ENCODE measurements at regions of chr6 and their contacts with region 1.

Region 1: GRCh38 chr6:52087498-52087999 is at the start of gene PKHD1:
- DNase-seq: no peak
- ATAC-seq: peak in 1 of 2 donors; percentile 74
- H3K4me3 ChIP-seq: no peak within 1 kb of the TSS
- H3K27ac ChIP-seq: no peak within 1 kb of the TSS
- H3K4me1 ChIP-seq: no peaks in the 10 kb centered on the region
- H3K27me3 ChIP-seq: no peaks in the 10 kb centered on the region
- CTCF ChIP-seq: peak in 4 of 5 experiments; percentile 34 to 49 (median 42)
- POLR2A ChIP-seq: no peak
- total RNA-seq, gene PKHD1: 0.02 to 0.05 (median 0.02) TPM in 3 of 4 donors, not detected in the other

Region 2: DNA sequence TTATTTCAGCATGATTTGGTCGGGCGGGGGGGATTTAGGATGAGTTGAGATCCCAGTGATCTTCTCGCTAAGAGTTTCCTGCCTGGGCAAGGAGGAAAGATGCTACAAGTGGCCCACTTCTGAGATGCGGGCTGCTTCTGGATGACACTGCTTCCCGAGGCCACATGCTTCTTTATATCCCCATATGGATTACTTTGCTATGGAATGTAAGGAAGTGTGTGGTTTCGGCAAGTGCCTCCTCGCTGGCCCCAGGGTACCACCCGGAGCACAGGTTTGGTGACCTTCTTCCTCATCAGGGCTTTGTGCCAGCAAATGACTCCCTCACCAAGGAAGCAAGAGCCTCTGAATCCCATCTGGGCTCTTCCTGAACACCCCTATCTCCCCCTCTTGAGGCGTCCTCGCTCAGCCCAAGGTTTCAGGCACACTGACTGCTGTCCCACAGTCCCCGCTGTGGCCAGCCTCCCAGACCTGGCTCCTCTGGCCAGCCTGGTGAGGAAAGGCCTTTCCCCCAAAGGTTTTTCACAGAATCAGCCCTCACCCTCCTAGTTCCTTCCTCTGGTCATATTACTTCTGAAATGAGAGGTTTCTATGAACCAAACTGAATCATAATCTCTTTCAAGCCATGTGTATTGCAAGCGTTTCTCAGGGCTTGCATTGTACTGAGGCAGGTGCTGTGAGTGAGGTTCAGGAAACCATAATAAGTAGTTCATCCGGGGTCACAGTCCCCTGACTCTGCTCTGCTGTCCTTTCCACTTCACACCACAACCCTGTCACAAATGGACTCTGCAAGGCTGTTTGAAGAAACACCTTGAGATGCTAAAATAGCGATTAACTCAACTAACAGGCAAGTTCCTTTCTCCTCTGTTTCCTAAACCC is 56.9 kb after region 1 on chr6:
- in situ Hi-C with region 1: no loop called
- intact Hi-C with region 1: no loop called
- DNase-seq: no peak
- ATAC-seq: no peak
- H3K4me3 ChIP-seq: no peak overlapping the region
- H3K27ac ChIP-seq: peak overlapping the region in 3 of 4 donors; percentile 27 to 78 (median 39)
- H3K4me1 ChIP-seq: peaks cover 23 to 30% of the 10 kb centered on the region in 2 donors
- H3K27me3 ChIP-seq: no peaks in the 10 kb centered on the region
- CTCF ChIP-seq: no peak
- POLR2A ChIP-seq: no peak

Region 3: DNA sequence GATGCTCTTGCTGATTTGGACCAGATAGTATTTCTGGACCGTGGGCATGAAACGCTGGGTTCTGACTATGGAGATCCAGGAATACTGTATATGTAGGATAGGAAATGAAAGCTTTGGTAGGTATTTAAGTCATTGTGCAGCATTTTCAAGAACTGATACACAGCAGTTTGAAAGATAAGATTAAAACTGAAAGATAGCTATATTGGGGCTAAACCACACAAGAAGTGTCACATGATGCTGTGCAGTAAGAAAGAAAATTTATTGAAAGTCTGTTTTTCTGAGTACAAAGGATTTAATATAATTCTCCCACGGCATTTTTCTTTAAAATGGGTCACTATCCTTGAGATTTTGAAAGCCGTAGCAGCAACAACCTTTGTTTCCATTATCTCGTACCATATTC is 98.9 kb after region 1 on chr6:
- in situ Hi-C with region 1: no loop called
- intact Hi-C with region 1: no loop called
- DNase-seq: no peak
- ATAC-seq: no peak
- H3K4me3 ChIP-seq: no peak overlapping the region
- H3K27ac ChIP-seq: no peak overlapping the region
- H3K4me1 ChIP-seq: peaks cover 4 to 5% of the 10 kb centered on the region in 2 donors
- H3K27me3 ChIP-seq: no peaks in the 10 kb centered on the region
- CTCF ChIP-seq: no peak
- POLR2A ChIP-seq: no peak

Region 4: GRCh38 chr6:52243282-52243893 is 155.8 kb after region 1 on chr6:
- in situ Hi-C with region 1: loop called (anchors 10 kb)
- intact Hi-C with region 1: no loop called
- DNase-seq: no peak
- ATAC-seq: no peak
- H3K4me3 ChIP-seq: no peak overlapping the region
- H3K27ac ChIP-seq: no peak overlapping the region
- H3K4me1 ChIP-seq: no peaks in the 10 kb centered on the region
- H3K27me3 ChIP-seq: no peaks in the 10 kb centered on the region
- CTCF ChIP-seq: no peak
- POLR2A ChIP-seq: no peak